GM12878 (cell line): ENCODE measurements at regions of chr15 and their contacts with region 1.

Region 1: GRCh38 chr15:89851673-89852341 is 37.2 kb upstream of the ANPEP start:
- DNase-seq: peak; percentile 30
- ATAC-seq: peak; percentile 91
- H3K4me3 ChIP-seq: no peak overlapping the region
- H3K27ac ChIP-seq: peak overlapping the region; percentile 85
- H3K4me1 ChIP-seq: peaks cover 45% of the 10 kb centered on the region
- H3K27me3 ChIP-seq: no peaks in the 10 kb centered on the region
- CTCF ChIP-seq: no peak
- EP300 ChIP-seq: no peak
- POLR2A ChIP-seq: no peak
- RAD21 ChIP-seq: no peak

Region 2: GRCh38 chr15:89803881-89804800 is 47.7 kb before region 1 on chr15:
- CTCF ChIA-PET with region 1: no interaction called
- POLR2A ChIA-PET with region 1: no interaction called
- RAD21 ChIA-PET with region 1: no interaction called
- SMC1A ChIA-PET with region 1: no interaction called
- in situ Hi-C with region 1: no loop called
- intact Hi-C with region 1: no loop called
- DNase-seq: no peak
- ATAC-seq: no peak
- H3K4me3 ChIP-seq: no peak overlapping the region
- H3K27ac ChIP-seq: no peak overlapping the region
- H3K4me1 ChIP-seq: no peaks in the 10 kb centered on the region
- H3K27me3 ChIP-seq: no peaks in the 10 kb centered on the region
- CTCF ChIP-seq: no peak
- EP300 ChIP-seq: no peak
- POLR2A ChIP-seq: no peak
- RAD21 ChIP-seq: no peak

Region 3: GRCh38 chr15:89863918-89864317 is 12.1 kb after region 1 on chr15:
- CTCF ChIA-PET with region 1: interaction called, 4 read pairs
- POLR2A ChIA-PET with region 1: no interaction called
- RAD21 ChIA-PET with region 1: interaction called, 3 read pairs
- SMC1A ChIA-PET with region 1: interaction called, 10 read pairs
- in situ Hi-C with region 1: no loop called
- intact Hi-C with region 1: no loop called
- DNase-seq: no peak
- ATAC-seq: no peak
- H3K4me3 ChIP-seq: no peak overlapping the region
- H3K27ac ChIP-seq: no peak overlapping the region
- H3K4me1 ChIP-seq: peaks cover 14% of the 10 kb centered on the region
- H3K27me3 ChIP-seq: no peaks in the 10 kb centered on the region
- CTCF ChIP-seq: no peak
- EP300 ChIP-seq: no peak
- POLR2A ChIP-seq: no peak
- RAD21 ChIP-seq: no peak